ENCODE measurements at regions of chr12 and their contacts with region 1.

Region 1: DNA sequence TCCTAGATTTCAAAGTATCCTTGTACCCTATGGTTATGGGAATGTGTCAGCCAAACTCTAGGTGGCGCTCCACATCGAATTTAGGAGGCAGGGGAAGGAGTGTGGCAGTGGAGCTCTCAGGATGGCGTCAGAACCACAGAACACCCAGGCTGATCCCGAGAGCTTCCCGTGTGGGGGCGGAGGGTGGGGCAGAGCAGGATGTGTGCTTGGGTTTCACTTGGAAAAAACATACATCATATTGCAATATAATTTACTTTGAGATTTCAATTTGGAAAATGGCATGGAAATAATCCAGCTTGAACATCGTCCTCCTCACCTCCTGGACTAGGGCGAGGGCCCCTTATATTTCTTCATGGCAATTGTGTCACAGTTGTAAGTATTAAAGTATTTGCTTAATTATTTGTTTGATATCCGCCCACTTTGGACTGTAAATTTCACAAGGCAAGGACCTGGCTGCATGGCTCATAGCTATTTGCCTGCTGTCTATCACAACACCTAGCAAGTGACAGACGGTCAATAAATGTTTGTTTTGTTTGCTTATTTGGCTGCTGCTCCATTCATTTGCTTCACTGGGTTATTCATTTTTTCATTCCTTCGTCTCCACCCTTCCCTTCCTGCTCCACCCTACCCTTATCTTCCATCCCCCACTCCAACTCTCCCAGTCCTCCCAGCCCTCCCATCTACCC is 221.5 kb upstream of the HMGA2 start:
- DNase-seq: peak; percentile 79
- ATAC-seq: peak; percentile 76
- H3K4me3 Mint-ChIP-seq: no peak overlapping the region
- H3K27ac Mint-ChIP-seq: no peak overlapping the region
- H3K4me1 Mint-ChIP-seq: peaks cover 2% of the 10 kb centered on the region
- H3K27me3 Mint-ChIP-seq: peaks cover 33% of the 10 kb centered on the region

Region 2: DNA sequence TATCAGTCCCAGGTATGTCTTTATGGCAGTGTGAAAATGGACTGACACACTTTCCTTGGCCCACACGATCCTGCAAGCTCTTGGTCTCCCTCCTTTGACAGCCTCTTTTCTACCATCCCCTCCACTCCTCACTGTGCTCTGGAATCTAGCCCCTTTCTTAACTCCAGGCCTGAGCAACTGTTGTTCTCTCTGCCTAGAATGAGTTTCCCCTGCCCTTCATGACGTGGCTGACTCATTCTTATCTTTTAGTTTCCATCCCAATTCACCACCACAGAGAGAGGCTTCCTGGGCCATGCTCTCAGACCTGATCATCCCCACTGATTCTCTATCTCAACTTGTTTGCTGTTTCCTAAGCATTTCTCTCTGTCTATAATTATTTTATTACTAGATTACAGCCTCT is 64.1 kb after region 1 on chr12:
- CTCF ChIA-PET with region 1: interaction called, 3 read pairs
- POLR2A ChIA-PET with region 1: no interaction called
- intact Hi-C with region 1: loop called in 1 of 2 experiments (anchors 5 kb)
- DNase-seq: peak; percentile 49
- ATAC-seq: peak; percentile 86
- H3K4me3 Mint-ChIP-seq: peak overlapping the region; percentile 9
- H3K27ac Mint-ChIP-seq: peak overlapping the region; percentile 73
- H3K4me1 Mint-ChIP-seq: peaks cover 34% of the 10 kb centered on the region
- H3K27me3 Mint-ChIP-seq: peaks cover 48% of the 10 kb centered on the region

Region 3: DNA sequence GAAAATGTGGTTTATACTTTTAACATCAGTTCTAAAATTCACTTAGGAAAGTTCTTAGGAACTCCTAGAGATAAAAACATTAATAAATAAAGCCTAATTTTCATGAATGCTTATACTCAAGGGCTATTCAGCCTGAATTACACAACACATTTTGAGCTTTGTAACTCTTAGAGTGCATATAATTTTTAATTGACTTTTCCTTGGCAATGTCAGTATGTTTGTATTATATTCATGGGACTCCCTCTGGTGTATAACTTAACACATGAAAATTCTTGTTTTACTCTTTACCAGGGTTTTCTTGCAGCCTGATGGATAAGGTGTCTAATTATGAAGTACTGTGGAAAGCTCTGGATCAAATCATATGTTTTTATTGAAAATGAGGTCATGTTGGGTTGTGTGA is 71.0 kb after region 1 on chr12:
- CTCF ChIA-PET with region 1: interaction called, 4 read pairs
- POLR2A ChIA-PET with region 1: no interaction called
- intact Hi-C with region 1: loop called (anchors 2 to 5 kb)
- DNase-seq: no peak
- ATAC-seq: no peak
- H3K4me3 Mint-ChIP-seq: no peak overlapping the region
- H3K27ac Mint-ChIP-seq: no peak overlapping the region
- H3K4me1 Mint-ChIP-seq: peaks cover 12% of the 10 kb centered on the region
- H3K27me3 Mint-ChIP-seq: peaks cover 43% of the 10 kb centered on the region

Region 4: DNA sequence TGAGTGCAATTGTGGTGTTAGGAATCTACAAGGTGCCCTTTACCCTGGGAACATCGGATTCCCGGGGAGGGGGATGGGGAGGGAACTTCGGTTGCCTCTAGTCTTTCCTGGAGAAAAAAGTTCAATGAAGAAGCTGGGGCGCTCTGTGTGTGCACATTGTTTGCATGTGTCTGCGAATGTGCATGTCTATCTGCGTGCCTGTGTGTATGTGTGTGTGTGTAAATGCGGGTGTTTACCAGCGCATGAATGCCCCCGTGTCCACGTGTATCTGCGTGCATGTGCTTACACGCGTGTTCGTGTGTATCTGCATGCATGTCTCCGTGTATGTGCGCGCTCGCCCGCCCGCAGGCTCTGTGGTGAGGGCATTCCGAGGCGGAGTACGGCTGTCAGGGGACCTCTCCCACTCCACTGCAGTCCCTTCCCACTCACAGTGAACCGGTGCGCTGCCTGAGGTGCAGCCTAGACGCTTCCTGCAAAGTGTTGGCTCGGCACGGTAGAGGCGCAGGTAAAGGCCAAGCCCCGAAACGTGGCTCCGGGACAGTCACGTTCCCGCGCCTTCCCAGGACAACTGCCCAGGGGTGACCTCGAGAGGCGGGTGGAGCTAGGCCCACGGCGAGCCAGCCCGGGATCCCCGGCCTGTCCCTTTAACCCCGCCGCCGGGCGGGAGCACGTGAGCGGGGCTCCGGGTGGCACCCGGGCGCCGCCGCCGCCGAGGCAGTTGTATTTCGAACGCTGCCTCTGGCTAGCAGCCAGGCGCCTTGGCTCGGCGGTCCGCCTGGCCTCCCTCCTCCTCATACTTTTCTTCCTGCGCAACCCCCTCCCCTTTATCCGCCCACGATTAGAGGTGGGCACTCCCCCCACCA is 221.0 kb after region 1 on chr12:
- CTCF ChIA-PET with region 1: no interaction called
- POLR2A ChIA-PET with region 1: no interaction called
- intact Hi-C with region 1: loop called in 1 of 2 experiments (anchors 10 kb)
- DNase-seq: peak; percentile 42
- ATAC-seq: no peak
- H3K4me3 Mint-ChIP-seq: peak overlapping the region; percentile 54
- H3K27ac Mint-ChIP-seq: no peak overlapping the region
- H3K4me1 Mint-ChIP-seq: peaks cover 25% of the 10 kb centered on the region
- H3K27me3 Mint-ChIP-seq: peaks cover 51% of the 10 kb centered on the region

Region 5: GRCh38 chr12:65986047-65986446 is 383.3 kb after region 1 on chr12:
- CTCF ChIA-PET with region 1: interaction called, 3 read pairs
- POLR2A ChIA-PET with region 1: no interaction called
- intact Hi-C with region 1: loop called in 1 of 2 experiments (anchors 1 kb)
- DNase-seq: no peak
- ATAC-seq: no peak
- H3K4me3 Mint-ChIP-seq: no peak overlapping the region
- H3K27ac Mint-ChIP-seq: no peak overlapping the region
- H3K4me1 Mint-ChIP-seq: no peaks in the 10 kb centered on the region
- H3K27me3 Mint-ChIP-seq: peaks cover 5% of the 10 kb centered on the region

Region 6: GRCh38 chr12:66087365-66087943 is 484.7 kb after region 1 on chr12:
- CTCF ChIA-PET with region 1: interaction called, 4 read pairs
- POLR2A ChIA-PET with region 1: no interaction called
- intact Hi-C with region 1: loop called in 1 of 2 experiments (anchors 1 kb)
- DNase-seq: peak; percentile 76
- ATAC-seq: peak; percentile 60
- H3K4me3 Mint-ChIP-seq: no peak overlapping the region
- H3K27ac Mint-ChIP-seq: no peak overlapping the region
- H3K4me1 Mint-ChIP-seq: no peaks in the 10 kb centered on the region
- H3K27me3 Mint-ChIP-seq: peaks cover 15% of the 10 kb centered on the region

Region 7: GRCh38 chr12:66107451-66107915 is 504.7 kb after region 1 on chr12:
- CTCF ChIA-PET with region 1: no interaction called
- POLR2A ChIA-PET with region 1: no interaction called
- intact Hi-C with region 1: loop called in 1 of 2 experiments (anchors 5 kb)
- DNase-seq: peak; percentile 51
- ATAC-seq: peak; percentile 92
- H3K4me3 Mint-ChIP-seq: no peak overlapping the region
- H3K27ac Mint-ChIP-seq: no peak overlapping the region
- H3K4me1 Mint-ChIP-seq: peaks cover 2% of the 10 kb centered on the region
- H3K27me3 Mint-ChIP-seq: peaks cover 10% of the 10 kb centered on the region

Measured in activated CD4-positive, alpha-beta T cell treated with anti-CD3 and anti-CD28 coated beads for 36 hours (primary cell).